ENCODE measurements at regions of chr5 and their contacts with region 1.

Region 1: DNA sequence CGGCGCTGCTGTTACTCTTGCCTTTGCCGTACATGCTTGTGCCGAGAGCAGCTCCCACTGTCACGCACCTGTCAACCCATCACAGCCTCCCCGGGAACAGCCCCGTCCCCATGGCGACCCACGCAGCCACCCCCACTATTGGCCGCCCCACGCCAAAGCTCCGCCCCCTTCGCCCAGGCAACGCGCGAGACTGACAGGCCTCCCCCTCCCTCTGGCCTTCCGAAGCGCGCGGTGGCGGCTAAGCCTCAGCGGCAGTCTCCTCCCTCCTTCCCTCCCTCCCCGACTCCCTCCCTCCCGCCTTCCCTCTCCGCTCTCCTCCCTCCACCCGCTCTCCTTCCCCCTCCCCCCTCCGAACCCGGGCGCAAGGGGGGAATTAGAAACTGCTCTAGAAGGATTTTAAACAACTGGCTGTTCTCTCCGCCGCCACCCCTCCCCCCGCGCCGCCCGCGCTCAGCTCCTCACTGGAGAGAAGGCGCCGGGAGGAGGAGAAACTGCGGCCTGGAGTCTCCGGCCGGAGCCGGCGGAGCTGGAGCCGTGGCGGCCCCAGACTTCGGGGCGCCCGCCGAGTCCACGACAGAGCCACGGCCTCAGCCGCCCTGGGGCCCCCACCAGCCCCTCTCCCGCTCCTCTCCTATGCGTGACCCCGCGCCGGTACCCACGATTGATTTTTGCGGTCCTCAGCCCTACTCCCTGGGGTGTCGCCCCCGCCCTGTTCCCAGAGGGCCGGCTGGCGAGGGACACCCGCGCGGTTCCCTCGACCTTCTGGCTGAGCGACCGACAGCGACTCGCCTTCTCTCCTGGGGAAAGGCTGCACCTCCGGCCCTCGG is at the start of gene SSBP2:
- DNase-seq: peak; percentile 94 to 99 (median 95)
- ATAC-seq: peak; percentile 84
- H3K4me3 ChIP-seq: peak within 1 kb of the TSS; percentile 73
- H3K27ac ChIP-seq: peak within 1 kb of the TSS; percentile 91
- H3K4me1 ChIP-seq: peaks cover 24 to 48% of the 10 kb centered on the region in 2 experiments
- H3K27me3 ChIP-seq: no peaks in the 10 kb centered on the region
- CTCF ChIP-seq: 0 out of 6 replicates have a peak, but pooled peaks of 1 of the 3 experiments have one; percentile 4
- EP300 ChIP-seq: peak; percentile 98
- POLR2A ChIP-seq: peak; percentile 78
- RAD21 ChIP-seq: peak; percentile 70 to 75
- polyA plus RNA-seq, gene SSBP2: 81.8 to 133 TPM

Region 2: DNA sequence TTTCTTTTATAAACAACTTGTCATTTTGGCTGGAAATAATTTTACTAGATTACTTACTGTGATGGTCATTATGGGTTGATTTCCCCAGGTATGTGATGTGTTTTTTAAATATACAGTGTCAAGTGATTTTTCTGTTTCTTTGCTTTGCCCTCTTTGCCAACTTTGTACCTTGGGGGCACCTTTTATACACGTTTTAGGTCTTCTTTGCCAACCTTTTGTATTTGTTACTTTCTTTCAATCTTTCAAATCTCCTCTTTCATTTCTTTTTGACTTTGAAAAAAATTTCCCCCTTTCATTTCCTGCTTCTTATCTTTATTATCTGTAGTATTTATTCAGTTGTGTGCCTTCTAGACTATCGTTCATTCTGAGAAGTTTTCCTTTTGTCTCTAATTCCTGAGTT is 1031.0 kb before region 1 on chr5:
- CTCF ChIA-PET with region 1: no interaction called
- POLR2A ChIA-PET with region 1: no interaction called
- in situ Hi-C with region 1: no loop called
- intact Hi-C with region 1: no loop called
- DNase-seq: no peak
- ATAC-seq: no peak
- H3K4me3 ChIP-seq: no peak overlapping the region
- H3K27ac ChIP-seq: no peak overlapping the region
- H3K4me1 ChIP-seq: no peaks in the 10 kb centered on the region
- H3K27me3 ChIP-seq: no peaks in the 10 kb centered on the region
- CTCF ChIP-seq: no peak
- EP300 ChIP-seq: no peak
- POLR2A ChIP-seq: no peak
- RAD21 ChIP-seq: no peak

Region 3: GRCh38 chr5:81506900-81507588 is 244.2 kb before region 1 on chr5:
- CTCF ChIA-PET with region 1: no interaction called
- POLR2A ChIA-PET with region 1: no interaction called
- in situ Hi-C with region 1: no loop called
- intact Hi-C with region 1: loop called (anchors 2 kb)
- DNase-seq: peak; percentile 30 to 83 (median 61)
- ATAC-seq: peak; percentile 100
- H3K4me3 ChIP-seq: no peak overlapping the region
- H3K27ac ChIP-seq: no peak overlapping the region; the same call in 2 of the 3 replicates
- H3K4me1 ChIP-seq: peaks cover 0 to 9% of the 10 kb centered on the region in 2 experiments; a peak in 2 of 5 replicates
- H3K27me3 ChIP-seq: no peaks in the 10 kb centered on the region
- CTCF ChIP-seq: peak; percentile 72 to 93 (median 80)
- EP300 ChIP-seq: no peak; the same call in 1 of the 2 replicates
- POLR2A ChIP-seq: no peak
- RAD21 ChIP-seq: peak; percentile 93 to 94

Region 4: DNA sequence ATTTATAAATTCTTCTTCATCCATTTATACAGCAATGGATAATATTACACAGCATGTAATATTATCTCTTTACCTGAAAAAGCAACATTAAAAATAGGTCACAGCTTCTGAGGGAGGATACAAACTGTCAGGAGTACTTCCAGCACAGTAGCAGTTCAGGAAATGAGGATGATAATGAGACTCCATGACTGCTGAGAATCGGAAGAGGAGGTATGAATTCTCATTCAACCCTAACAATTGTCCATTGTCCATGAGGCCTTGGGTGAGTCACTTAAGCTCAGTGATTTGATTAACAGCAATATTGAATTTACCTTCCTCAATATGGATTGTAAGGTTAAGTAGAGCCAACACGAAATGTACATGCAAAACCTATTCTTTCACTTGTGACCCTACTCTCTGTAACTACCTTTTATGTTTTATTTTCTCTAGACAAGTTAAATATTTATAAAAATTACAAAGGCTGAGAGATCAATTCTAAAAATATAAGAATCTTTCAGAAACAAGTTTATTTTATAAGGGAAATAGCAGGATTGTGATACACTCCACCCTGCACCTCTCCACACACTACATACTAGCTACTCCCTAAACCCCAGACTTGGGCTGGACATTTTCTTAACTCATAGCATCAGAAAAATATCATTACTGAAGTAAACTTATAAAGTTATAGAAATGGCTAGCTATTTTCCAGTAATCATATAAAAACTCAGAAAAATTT is 198.2 kb before region 1 on chr5:
- CTCF ChIA-PET with region 1: no interaction called
- POLR2A ChIA-PET with region 1: no interaction called
- in situ Hi-C with region 1: no loop called
- intact Hi-C with region 1: no loop called
- DNase-seq: peak in 1 of 4 experiments; percentile 6
- ATAC-seq: peak; percentile 68
- H3K4me3 ChIP-seq: no peak overlapping the region
- H3K27ac ChIP-seq: peak overlapping the region; percentile 25; the same call in 1 of the 3 replicates
- H3K4me1 ChIP-seq: no peaks in the 10 kb centered on the region
- H3K27me3 ChIP-seq: no peaks in the 10 kb centered on the region
- CTCF ChIP-seq: no peak
- EP300 ChIP-seq: no peak
- POLR2A ChIP-seq: no peak
- RAD21 ChIP-seq: no peak

Region 5: DNA sequence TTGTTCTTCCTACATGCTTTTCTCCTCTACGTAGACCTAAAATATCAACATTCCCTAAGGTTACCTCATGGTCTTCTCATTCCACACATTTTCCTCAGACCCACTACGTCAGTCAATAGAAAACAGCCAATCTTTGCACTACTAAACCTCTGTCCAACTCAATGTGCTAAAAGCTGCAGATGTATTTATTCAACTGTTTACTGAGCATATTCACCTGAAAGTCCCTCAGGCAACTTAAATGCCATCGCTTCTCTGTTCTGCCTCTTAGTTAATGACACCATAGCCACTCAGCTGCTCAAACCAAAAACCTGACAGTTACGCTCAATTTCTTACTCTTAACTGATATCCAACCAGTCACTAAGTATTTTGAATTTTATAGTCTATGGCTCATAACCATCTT is 75.4 kb before region 1 on chr5:
- CTCF ChIA-PET with region 1: no interaction called
- POLR2A ChIA-PET with region 1: no interaction called
- in situ Hi-C with region 1: no loop called
- intact Hi-C with region 1: no loop called
- DNase-seq: no peak
- ATAC-seq: no peak
- H3K4me3 ChIP-seq: no peak overlapping the region
- H3K27ac ChIP-seq: no peak overlapping the region
- H3K4me1 ChIP-seq: no peaks in the 10 kb centered on the region
- H3K27me3 ChIP-seq: no peaks in the 10 kb centered on the region
- CTCF ChIP-seq: no peak
- EP300 ChIP-seq: no peak
- POLR2A ChIP-seq: no peak
- RAD21 ChIP-seq: no peak

Region 6: GRCh38 chr5:81787474-81788242 is 36.4 kb after region 1 on chr5:
- CTCF ChIA-PET with region 1: no interaction called
- POLR2A ChIA-PET with region 1: no interaction called
- in situ Hi-C with region 1: no loop called
- intact Hi-C with region 1: loop called (anchors 2 kb)
- DNase-seq: peak in 1 of 4 experiments; percentile 27
- ATAC-seq: peak; percentile 68
- H3K4me3 ChIP-seq: no peak overlapping the region
- H3K27ac ChIP-seq: no peak overlapping the region
- H3K4me1 ChIP-seq: peaks cover 0 to 21% of the 10 kb centered on the region in 2 experiments; a peak in 4 of 5 replicates
- H3K27me3 ChIP-seq: no peaks in the 10 kb centered on the region
- CTCF ChIP-seq: no peak
- EP300 ChIP-seq: peak; percentile 18; the same call in 1 of the 2 replicates
- POLR2A ChIP-seq: no peak
- RAD21 ChIP-seq: no peak

Region 7: DNA sequence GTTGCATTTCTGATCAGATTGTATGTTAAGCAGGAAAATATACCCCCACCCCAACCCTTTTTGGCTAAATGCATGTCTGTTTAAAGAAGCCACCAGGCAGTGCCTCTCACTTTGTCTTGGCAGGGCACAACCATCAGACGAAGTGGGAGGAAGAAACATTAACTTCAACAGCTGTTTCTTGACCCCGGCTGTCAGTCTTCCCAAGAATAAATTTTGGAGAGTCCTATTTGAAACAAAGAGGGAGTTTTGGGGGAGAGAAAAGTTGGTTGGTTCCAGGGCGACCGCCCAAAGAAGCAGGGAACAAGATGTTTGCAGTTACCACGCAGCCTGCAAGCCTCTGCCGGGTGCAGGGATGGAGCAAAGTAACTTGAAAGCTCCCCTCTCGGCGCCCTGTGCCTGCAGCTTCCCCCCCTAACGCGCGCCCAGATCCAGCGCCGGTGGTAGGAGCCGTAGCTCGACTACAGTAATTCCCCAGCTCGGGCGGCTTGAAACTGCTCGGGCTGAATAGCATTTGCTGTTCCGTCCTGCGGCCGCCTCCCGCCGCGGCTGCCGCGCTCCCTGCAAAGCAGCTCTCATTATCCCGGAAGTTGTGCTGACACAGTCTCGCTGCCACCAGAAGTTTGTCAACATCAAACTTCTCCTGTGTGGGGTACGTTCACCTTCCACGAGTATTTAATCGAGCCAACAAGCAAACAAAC is 100.4 kb after region 1 on chr5:
- CTCF ChIA-PET with region 1: no interaction called
- POLR2A ChIA-PET with region 1: interaction called, 61 read pairs
- in situ Hi-C with region 1: loop called (anchors 5 kb)
- intact Hi-C with region 1: loop called (anchors 1 kb)
- DNase-seq: peak; percentile 82 to 96 (median 86)
- ATAC-seq: peak; percentile 85
- H3K4me3 ChIP-seq: peak overlapping the region; percentile 34
- H3K27ac ChIP-seq: peak overlapping the region; percentile 81
- H3K4me1 ChIP-seq: peaks cover 32 to 50% of the 10 kb centered on the region in 2 experiments
- H3K27me3 ChIP-seq: no peaks in the 10 kb centered on the region
- CTCF ChIP-seq: no peak
- EP300 ChIP-seq: peak; percentile 97
- POLR2A ChIP-seq: peak; percentile 69
- RAD21 ChIP-seq: peak; percentile 68 to 72

Region 8: GRCh38 chr5:81971712-81972495 is 220.7 kb after region 1 on chr5 and contains the start of gene ATG10:
- CTCF ChIA-PET with region 1: no interaction called
- POLR2A ChIA-PET with region 1: no interaction called
- in situ Hi-C with region 1: no loop called
- intact Hi-C with region 1: loop called (anchors 5 kb)
- DNase-seq: peak; percentile 95 to 96 (median 96)
- ATAC-seq: peak; percentile 97
- H3K4me3 ChIP-seq: peak within 1 kb of the TSS; percentile 63
- H3K27ac ChIP-seq: peak within 1 kb of the TSS; percentile 97
- H3K4me1 ChIP-seq: peaks cover 8 to 10% of the 10 kb centered on the region in 2 experiments; a peak in 4 of 5 replicates
- H3K27me3 ChIP-seq: no peaks in the 10 kb centered on the region
- CTCF ChIP-seq: 0 out of 6 replicates have a peak, but pooled peaks of 1 of the 3 experiments have one; percentile 1
- EP300 ChIP-seq: no peak
- POLR2A ChIP-seq: peak; percentile 94
- RAD21 ChIP-seq: peak; percentile 24 to 33; a peak in 2 of 4 replicates
- polyA plus RNA-seq, gene ATG10: 14.6 to 15.0 TPM

Region 9: GRCh38 chr5:82165740-82166530 is 414.7 kb after region 1 on chr5:
- CTCF ChIA-PET with region 1: no interaction called
- POLR2A ChIA-PET with region 1: interaction called, 3 read pairs
- in situ Hi-C with region 1: no loop called
- intact Hi-C with region 1: loop called (anchors 2 kb)
- DNase-seq: peak; percentile 19 to 76 (median 45)
- ATAC-seq: peak; percentile 98
- H3K4me3 ChIP-seq: no peak overlapping the region
- H3K27ac ChIP-seq: peak overlapping the region; percentile 25; the same call in 1 of the 3 replicates
- H3K4me1 ChIP-seq: peaks cover 0 to 3% of the 10 kb centered on the region in 2 experiments; a peak in 2 of 5 replicates
- H3K27me3 ChIP-seq: no peaks in the 10 kb centered on the region
- CTCF ChIP-seq: peak; percentile 65 to 92 (median 78)
- EP300 ChIP-seq: no peak
- POLR2A ChIP-seq: no peak
- RAD21 ChIP-seq: peak; percentile 94 to 95